Natural killer cell (primary cell): ENCODE measurements at regions of chr4 and their contacts with region 1.

Region 1: DNA sequence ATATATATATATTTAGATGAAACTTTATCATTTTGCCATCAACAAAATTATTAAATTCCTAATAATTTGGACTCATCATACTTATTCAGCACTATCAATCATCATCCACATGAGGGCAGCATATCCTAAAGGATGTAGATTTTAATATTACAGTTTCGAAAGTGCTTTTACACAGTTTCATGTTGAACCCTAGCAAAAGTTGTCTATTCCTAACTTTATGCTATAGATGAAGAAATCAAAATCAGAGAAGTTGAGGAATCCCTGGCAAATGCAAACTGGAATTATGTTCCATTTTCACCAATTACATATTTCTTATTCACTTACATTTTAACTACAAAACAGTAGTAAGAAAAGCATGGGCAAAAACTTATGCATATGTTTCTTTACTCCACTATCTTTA is 36.6 kb upstream of the UGT2A1 start:
- DNase-seq: peak in 1 of 2 donors; percentile 68
- ATAC-seq: peak; percentile 63 to 79 (median 76)
- H3K4me3 ChIP-seq: no peak overlapping the region
- H3K4me3 Mint-ChIP-seq: no peak overlapping the region
- H3K27ac ChIP-seq: no peak overlapping the region
- H3K27ac Mint-ChIP-seq: no peak overlapping the region
- H3K4me1 ChIP-seq: no peaks in the 10 kb centered on the region
- H3K4me1 Mint-ChIP-seq: no peaks in the 10 kb centered on the region
- H3K27me3 ChIP-seq: no peaks in the 10 kb centered on the region
- H3K27me3 Mint-ChIP-seq: peaks cover 3 to 15% of the 10 kb centered on the region in 2 donors
- CTCF ChIP-seq: peak; percentile 85

Region 2: DNA sequence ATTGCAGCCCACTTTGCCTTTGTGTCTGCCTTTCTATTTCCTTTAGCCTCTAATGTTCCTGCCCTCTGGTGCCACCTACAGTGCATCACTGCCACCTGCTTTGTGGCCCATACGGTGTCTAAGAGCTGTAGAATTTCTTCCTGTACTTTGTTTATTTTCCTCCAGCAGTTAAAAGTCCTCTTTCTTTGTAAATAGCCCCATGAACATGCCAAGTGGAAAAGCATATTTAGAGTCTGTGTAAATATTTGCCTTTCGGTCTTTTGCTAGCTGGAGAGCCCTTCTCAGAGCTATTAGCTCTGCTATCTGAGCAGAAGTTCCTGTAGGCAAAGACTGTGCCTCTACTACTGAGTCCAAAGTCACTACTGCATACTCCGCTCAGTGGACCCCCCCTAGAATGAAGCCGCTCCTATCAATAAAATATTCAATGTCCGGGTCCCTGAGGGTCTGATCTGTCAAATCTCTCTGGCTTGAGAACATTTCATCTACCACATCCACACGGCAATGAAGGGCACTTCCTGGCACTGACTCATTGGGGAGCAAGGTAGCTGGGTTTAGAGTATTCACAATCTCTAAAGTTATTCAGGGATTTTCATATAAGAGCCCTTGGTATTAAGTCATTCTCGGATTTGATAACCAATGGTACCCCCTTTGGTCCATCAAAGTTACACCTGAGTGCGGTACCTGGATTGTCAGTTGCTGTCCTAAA is 134.0 kb after region 1 on chr4:
- intact Hi-C with region 1: loop called (anchors 1 kb)
- DNase-seq: peak in 1 of 2 donors; percentile 72
- ATAC-seq: peak; percentile 84 to 99 (median 97)
- H3K4me3 ChIP-seq: no peak overlapping the region
- H3K4me3 Mint-ChIP-seq: no peak overlapping the region
- H3K27ac ChIP-seq: no peak overlapping the region
- H3K27ac Mint-ChIP-seq: peak overlapping the region in 1 of 2 donors; percentile 46
- H3K4me1 ChIP-seq: peaks cover 20% of the 10 kb centered on the region
- H3K4me1 Mint-ChIP-seq: peaks cover 21 to 28% of the 10 kb centered on the region in 2 donors
- H3K27me3 ChIP-seq: no peaks in the 10 kb centered on the region
- H3K27me3 Mint-ChIP-seq: no peaks in the 10 kb centered on the region
- CTCF ChIP-seq: peak; percentile 68

Region 3: GRCh38 chr4:69881173-69881773 is 191.7 kb after region 1 on chr4:
- intact Hi-C with region 1: loop called (anchors 1 kb)
- DNase-seq: peak in 1 of 2 donors; percentile 64
- ATAC-seq: peak; percentile 84 to 98 (median 97)
- H3K4me3 ChIP-seq: no peak overlapping the region
- H3K4me3 Mint-ChIP-seq: no peak overlapping the region
- H3K27ac ChIP-seq: no peak overlapping the region
- H3K27ac Mint-ChIP-seq: no peak overlapping the region
- H3K4me1 ChIP-seq: no peaks in the 10 kb centered on the region
- H3K4me1 Mint-ChIP-seq: no peaks in the 10 kb centered on the region
- H3K27me3 ChIP-seq: no peaks in the 10 kb centered on the region
- H3K27me3 Mint-ChIP-seq: peaks cover 0 to 2% of the 10 kb centered on the region in 2 donors
- CTCF ChIP-seq: peak; percentile 96

Region 4: DNA sequence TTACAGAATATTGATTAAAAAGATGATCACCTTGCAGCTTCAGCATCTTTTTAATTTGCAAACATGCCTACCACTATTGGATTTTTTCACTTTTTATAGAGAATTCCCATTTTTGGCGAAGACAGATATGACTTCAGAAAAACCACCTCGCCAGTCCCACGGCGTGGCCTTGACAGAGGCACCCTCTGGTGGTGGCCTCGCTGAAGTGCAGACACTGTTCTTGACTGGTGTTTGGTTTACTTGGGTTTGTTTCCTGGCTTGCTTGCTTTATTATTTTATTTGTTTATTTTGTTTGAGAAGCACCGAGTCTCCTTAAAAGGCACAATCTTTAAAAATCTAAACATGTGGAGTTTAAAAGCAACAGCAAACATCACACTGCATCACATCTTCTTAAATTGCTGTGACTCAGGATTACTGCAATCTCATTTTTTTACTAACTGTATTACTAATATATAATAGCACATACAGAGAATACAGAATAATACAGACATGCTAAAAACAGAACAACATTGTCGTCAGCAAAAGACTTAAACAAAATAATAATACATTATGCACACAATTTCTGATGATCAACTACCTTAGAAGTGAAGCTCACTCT is 815.7 kb after region 1 on chr4:
- intact Hi-C with region 1: loop called (anchors 1 kb)
- DNase-seq: peak; percentile 22 to 63
- ATAC-seq: peak; percentile 67 to 89 (median 76)
- H3K4me3 ChIP-seq: no peak overlapping the region
- H3K4me3 Mint-ChIP-seq: no peak overlapping the region
- H3K27ac ChIP-seq: no peak overlapping the region
- H3K27ac Mint-ChIP-seq: no peak overlapping the region
- H3K4me1 ChIP-seq: no peaks in the 10 kb centered on the region
- H3K4me1 Mint-ChIP-seq: no peaks in the 10 kb centered on the region
- H3K27me3 ChIP-seq: peaks cover 3% of the 10 kb centered on the region
- H3K27me3 Mint-ChIP-seq: no peaks in the 10 kb centered on the region
- CTCF ChIP-seq: peak; percentile 82

Region 5: DNA sequence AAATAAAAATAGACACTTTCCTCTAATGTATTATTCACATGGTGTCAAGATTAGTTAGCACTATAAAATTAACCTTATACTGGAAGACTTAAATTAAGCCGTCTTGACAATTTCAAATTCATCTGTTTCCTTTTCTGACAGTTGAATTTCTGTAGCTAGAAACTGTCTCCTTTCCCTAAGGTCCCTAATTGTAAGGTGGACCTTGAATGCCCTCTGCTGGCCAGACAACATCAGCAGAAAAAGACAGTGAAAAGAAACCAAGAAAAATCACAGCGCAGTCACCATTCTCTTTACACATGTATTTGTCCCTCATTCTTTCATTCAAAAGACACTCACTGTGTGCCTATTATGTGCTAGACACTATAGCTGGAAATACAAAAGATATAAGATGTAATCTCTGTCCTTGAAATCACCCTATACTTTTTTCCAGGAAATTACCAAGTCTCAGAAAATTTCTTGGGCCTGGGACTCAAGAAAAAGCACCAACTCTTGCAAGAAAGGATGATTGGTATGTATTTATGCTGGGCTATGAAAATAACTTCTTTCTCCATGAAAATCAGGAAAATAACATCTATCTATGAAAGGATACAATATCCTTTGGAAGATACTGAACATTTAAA is 869.7 kb after region 1 on chr4:
- intact Hi-C with region 1: loop called (anchors 5 kb)
- DNase-seq: peak in 1 of 2 donors; percentile 61
- ATAC-seq: peak in 1 of 3 donors; percentile 60
- H3K4me3 ChIP-seq: no peak overlapping the region
- H3K4me3 Mint-ChIP-seq: no peak overlapping the region
- H3K27ac ChIP-seq: no peak overlapping the region
- H3K27ac Mint-ChIP-seq: no peak overlapping the region
- H3K4me1 ChIP-seq: no peaks in the 10 kb centered on the region
- H3K4me1 Mint-ChIP-seq: peaks cover 0 to 11% of the 10 kb centered on the region in 2 donors
- H3K27me3 ChIP-seq: no peaks in the 10 kb centered on the region
- H3K27me3 Mint-ChIP-seq: peaks cover 0 to 2% of the 10 kb centered on the region in 2 donors
- CTCF ChIP-seq: peak; percentile 46